B cell (primary cell): ENCODE measurements at regions of chr7 and their contacts with region 1.

Region 1: GRCh38 chr7:129433847-129434674 is at the start of gene STRIP2:
- DNase-seq: peak; percentile 90
- ATAC-seq: peak; percentile 97
- H3K4me3 ChIP-seq: peak within 1 kb of the TSS; percentile 25 to 90 (median 74)
- H3K4me3 Mint-ChIP-seq: peak within 1 kb of the TSS; percentile 95
- H3K27ac ChIP-seq: peak within 1 kb of the TSS in 1 of 2 donors; percentile 56
- H3K27ac Mint-ChIP-seq: peak within 1 kb of the TSS; percentile 26
- H3K4me1 ChIP-seq: peaks cover 16 to 22% of the 10 kb centered on the region in 2 donors
- H3K4me1 Mint-ChIP-seq: peaks cover 22% of the 10 kb centered on the region
- H3K27me3 ChIP-seq: peaks cover 0 to 36% (median 24%) of the 10 kb centered on the region in 4 experiments
- H3K27me3 Mint-ChIP-seq: peaks cover 34% of the 10 kb centered on the region
- CTCF ChIP-seq: peak; percentile 23
- total RNA-seq, gene STRIP2: 0.39 and 0.79 TPM in 2 replicates

Region 2: DNA sequence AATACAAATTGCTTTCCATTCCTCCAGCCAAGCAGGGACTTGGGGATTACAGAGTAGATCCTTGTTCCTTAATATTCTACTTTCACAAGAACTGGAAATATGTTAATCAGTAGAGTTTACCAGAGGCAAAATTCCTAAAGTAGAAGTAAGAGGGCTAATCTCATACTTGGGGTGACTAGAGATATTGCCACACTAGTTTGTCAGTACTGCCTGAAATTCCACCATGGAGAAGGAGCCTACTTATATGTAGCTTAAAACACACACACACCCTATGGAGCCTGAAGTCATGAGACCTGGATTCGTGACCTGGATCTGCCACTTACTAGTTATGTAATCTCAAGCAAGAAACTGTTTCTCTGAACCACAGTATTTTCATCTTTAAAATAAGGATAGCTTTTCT is 34.0 kb after region 1 on chr7:
- CTCF ChIA-PET with region 1: interaction called, 3 read pairs
- POLR2A ChIA-PET with region 1: no interaction called
- intact Hi-C with region 1: loop called (anchors 5 kb)
- DNase-seq: no peak
- ATAC-seq: no peak
- H3K4me3 ChIP-seq: no peak overlapping the region
- H3K4me3 Mint-ChIP-seq: no peak overlapping the region
- H3K27ac ChIP-seq: no peak overlapping the region
- H3K27ac Mint-ChIP-seq: no peak overlapping the region
- H3K4me1 ChIP-seq: no peaks in the 10 kb centered on the region
- H3K4me1 Mint-ChIP-seq: peaks cover 1% of the 10 kb centered on the region
- H3K27me3 ChIP-seq: no peaks in the 10 kb centered on the region
- H3K27me3 Mint-ChIP-seq: no peaks in the 10 kb centered on the region
- CTCF ChIP-seq: no peak

Region 3: DNA sequence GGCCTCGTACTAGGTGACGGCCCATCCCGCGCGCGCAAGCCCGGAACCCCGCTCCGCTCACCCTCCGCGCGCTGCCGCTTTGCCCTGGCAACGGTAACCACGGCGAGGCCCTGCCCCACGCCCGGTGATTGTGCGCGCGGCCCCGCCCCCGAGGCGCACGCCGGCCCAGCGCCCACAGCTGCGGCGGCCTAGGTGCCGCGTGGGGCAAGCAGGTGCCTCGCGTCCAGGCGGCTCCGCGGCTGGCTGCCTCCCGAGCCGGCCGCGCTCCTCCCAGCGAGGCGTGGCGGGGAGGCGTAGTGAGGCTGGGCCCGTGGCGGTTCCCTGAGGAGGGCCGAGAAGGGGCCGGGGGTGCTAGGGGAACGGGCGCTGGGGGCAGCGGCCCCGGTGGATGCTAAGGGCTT is 68.3 kb after region 1 on chr7 and contains the start of gene SMKR1:
- CTCF ChIA-PET with region 1: no interaction called
- POLR2A ChIA-PET with region 1: no interaction called
- intact Hi-C with region 1: loop called (anchors 5 kb)
- DNase-seq: peak; percentile 98
- ATAC-seq: peak; percentile 89
- H3K4me3 ChIP-seq: peak within 1 kb of the TSS; percentile 54 to 77 (median 66)
- H3K4me3 Mint-ChIP-seq: peak within 1 kb of the TSS; percentile 90
- H3K27ac ChIP-seq: peak within 1 kb of the TSS; percentile 72
- H3K27ac Mint-ChIP-seq: peak within 1 kb of the TSS; percentile 89
- H3K4me1 ChIP-seq: peaks cover 14 to 32% of the 10 kb centered on the region in 2 donors
- H3K4me1 Mint-ChIP-seq: peaks cover 22% of the 10 kb centered on the region
- H3K27me3 ChIP-seq: no peaks in the 10 kb centered on the region
- H3K27me3 Mint-ChIP-seq: no peaks in the 10 kb centered on the region
- CTCF ChIP-seq: no peak
- total RNA-seq, gene SMKR1: 2.9 and 3.8 TPM in 2 replicates

Region 4: GRCh38 chr7:129611246-129612111 is 177.4 kb after region 1 on chr7 and contains the start of gene NRF1:
- CTCF ChIA-PET with region 1: no interaction called
- POLR2A ChIA-PET with region 1: no interaction called
- intact Hi-C with region 1: loop called (anchors 1 kb)
- DNase-seq: peak; percentile 96
- ATAC-seq: peak; percentile 87
- H3K4me3 ChIP-seq: peak within 1 kb of the TSS; percentile 70 to 97 (median 84)
- H3K4me3 Mint-ChIP-seq: peak within 1 kb of the TSS; percentile 97
- H3K27ac ChIP-seq: peak within 1 kb of the TSS; percentile 91 to 93
- H3K27ac Mint-ChIP-seq: peak within 1 kb of the TSS; percentile 97
- H3K4me1 ChIP-seq: peaks cover 47 to 53% of the 10 kb centered on the region in 2 donors
- H3K4me1 Mint-ChIP-seq: peaks cover 67% of the 10 kb centered on the region
- H3K27me3 ChIP-seq: no peaks in the 10 kb centered on the region
- H3K27me3 Mint-ChIP-seq: no peaks in the 10 kb centered on the region
- CTCF ChIP-seq: no peak
- total RNA-seq, gene NRF1: 49.2 and 53.0 TPM in 2 replicates